ENCODE measurements at regions of chr2 and their contacts with region 1.

Region 1: DNA sequence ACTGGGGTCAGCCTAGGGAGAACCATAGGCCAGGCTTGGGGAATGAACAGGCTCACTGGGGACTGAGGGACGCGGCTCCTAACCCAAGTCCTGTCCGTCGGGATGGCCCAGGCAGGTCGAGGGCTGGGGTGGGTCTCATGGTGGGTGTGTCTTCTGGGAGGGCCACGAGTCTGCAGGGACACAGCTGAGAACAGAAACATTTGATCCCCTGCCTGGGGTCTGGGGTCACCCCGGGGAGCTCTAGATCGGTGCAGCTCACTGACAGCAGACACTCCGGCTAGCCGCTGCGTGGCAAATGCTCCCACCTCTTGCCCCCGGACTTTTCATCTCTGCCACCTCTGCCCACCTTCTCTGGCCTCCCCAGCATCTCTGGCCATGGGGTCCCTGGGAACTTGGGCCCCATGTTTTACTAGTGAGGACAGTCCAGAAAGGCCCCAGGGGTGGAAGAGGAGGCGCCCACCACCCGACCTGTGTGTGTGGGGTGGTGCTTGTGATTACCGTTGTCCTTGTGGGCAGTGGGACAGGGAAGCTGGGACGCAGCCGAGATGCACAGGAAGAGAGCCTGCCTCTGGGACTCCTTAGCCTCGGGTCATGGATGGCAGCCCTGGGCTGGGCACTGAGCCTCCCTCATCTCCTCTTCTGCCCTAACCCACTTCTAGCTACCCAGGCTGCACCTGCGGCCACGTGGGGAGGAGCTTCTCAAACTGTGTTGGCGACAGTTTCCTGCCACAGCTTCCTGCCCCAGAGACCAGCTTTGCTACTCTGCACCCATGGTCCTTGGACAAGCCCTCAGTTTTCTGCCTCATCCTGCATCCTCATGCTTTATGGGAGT is 4.9 kb downstream of the ZAP70 start:
- DNase-seq: peak in 8 of 9 donors; percentile 66 to 74 (median 69)
- ATAC-seq: peak; percentile 87
- H3K4me3 ChIP-seq: peak overlapping the region; percentile 68
- H3K4me3 Mint-ChIP-seq: peak overlapping the region; percentile 86 to 100 (median 94)
- H3K27ac ChIP-seq: peak overlapping the region; percentile 95
- H3K27ac Mint-ChIP-seq: peak overlapping the region; percentile 89 to 100 (median 97)
- H3K4me1 ChIP-seq: peaks cover 73 to 77% of the 10 kb centered on the region in 2 donors
- H3K4me1 Mint-ChIP-seq: peaks cover 64 to 91% (median 75%) of the 10 kb centered on the region in 7 donors
- H3K27me3 ChIP-seq: no peaks in the 10 kb centered on the region
- H3K27me3 Mint-ChIP-seq: no peaks in the 10 kb centered on the region

Region 2: DNA sequence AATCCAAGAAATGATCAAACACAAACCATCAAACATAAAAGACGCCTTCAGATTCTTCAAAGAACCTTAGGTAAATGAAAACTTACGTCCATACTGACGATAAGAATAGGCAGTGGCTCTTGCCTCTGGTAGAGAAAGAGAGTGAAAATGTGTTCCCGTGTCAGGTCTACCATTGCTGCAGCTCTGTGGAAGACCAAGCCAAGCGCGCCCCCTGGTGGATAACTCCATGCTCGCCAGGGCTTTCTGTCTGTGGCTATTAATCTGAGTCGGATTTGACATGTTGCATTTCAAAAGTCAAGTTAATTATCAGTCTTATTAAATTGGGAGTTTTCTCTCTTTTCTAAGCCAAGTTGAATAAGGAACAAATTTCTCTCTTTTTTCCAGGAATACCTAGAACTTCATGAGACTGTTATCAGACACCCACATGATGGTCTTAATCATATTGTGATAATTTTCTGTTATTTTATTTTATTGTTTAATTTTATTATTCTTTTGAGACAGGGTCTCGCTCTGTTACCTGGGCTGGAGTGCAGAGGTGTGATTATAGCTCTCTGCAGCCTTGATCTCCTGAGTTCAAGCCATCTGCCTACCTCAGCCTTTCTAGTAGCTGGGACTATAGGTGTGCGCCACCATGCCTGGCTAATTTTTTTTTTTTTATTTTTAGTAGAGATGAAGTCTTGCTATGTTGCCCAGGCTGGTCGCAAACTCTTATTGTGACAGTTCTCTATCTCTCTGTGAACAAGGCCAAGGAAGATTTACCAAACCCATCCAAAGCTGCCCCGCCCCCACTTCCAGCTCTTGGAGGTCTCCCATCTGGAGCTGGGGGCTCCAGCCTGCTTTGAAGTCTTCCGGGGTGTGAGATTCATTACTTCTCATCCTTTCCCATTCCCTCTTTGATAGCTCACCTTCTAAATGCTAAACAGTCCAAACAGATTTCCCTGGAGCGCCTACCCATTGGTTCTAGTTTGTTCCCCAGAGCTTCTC is 20.7 kb before region 1 on chr2:
- CTCF ChIA-PET with region 1: interaction called, 8 read pairs
- POLR2A ChIA-PET with region 1: interaction called, 6 read pairs
- intact Hi-C with region 1: loop called in 1 of 2 experiments (anchors 2 kb)
- DNase-seq: peak; percentile 78 to 94 (median 87)
- ATAC-seq: peak; percentile 95
- H3K4me3 ChIP-seq: no peak overlapping the region
- H3K4me3 Mint-ChIP-seq: peak overlapping the region in 4 of 10 donors; percentile 19 to 59 (median 23)
- H3K27ac ChIP-seq: no peak overlapping the region
- H3K27ac Mint-ChIP-seq: peak overlapping the region in 2 of 9 donors; percentile 30 to 46
- H3K4me1 ChIP-seq: no peaks in the 10 kb centered on the region
- H3K4me1 Mint-ChIP-seq: peaks cover 4 to 16% (median 13%) of the 10 kb centered on the region in 7 donors
- H3K27me3 ChIP-seq: no peaks in the 10 kb centered on the region
- H3K27me3 Mint-ChIP-seq: peaks cover 0 to 6% (median 0%) of the 10 kb centered on the region in 5 donors

Region 3: DNA sequence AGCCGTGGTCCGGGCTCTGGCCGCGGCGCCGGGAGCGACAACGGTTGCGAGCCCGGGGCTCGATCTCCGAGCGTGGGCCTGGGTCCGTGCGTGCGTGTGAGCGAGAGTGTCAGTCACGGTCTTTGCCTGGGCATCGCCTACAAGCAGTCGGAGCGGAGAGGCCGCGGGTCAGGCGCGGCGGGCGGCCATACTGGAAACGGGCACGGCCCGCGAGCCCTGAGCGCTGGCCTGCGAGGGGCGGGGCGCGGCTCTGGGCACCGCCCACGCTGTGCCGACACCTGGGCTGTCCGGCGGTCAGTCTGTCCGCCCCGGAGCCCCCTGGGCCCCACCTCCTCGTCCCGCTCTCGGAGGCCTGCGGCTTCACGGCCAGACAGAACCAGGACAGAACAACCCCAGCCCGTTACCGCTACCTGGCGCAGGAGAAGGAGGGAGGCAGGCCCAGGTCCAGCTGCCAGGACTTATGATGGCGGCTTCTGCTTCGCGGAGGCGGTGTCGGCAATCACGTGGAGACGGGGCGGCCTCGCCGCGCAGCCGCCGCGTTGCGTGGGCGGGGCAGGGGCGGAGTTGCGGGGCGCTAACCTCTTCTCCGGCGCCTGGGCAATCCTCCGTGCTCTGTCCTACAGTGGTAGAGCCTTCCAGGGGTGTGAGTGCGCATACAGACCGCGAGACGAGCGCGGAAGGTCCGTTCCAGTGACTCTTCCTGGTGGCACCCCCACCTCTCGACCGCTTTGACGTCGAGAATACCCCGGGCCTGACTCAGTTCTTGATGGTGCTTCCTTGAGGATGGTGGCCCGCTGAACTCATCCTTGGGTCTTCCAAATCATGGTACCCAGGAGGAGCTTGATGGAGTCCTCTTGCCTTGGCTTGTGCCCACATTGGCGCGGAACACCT is 277.7 kb after region 1 on chr2 and contains the start of gene TMEM131:
- CTCF ChIA-PET with region 1: no interaction called
- POLR2A ChIA-PET with region 1: no interaction called
- intact Hi-C with region 1: loop called in 1 of 2 experiments (anchors 5 kb)
- DNase-seq: peak; percentile 89 to 98 (median 95)
- ATAC-seq: peak; percentile 93
- H3K4me3 ChIP-seq: peak within 1 kb of the TSS; percentile 90
- H3K4me3 Mint-ChIP-seq: peak within 1 kb of the TSS; percentile 85 to 98 (median 96)
- H3K27ac ChIP-seq: peak within 1 kb of the TSS; percentile 96
- H3K27ac Mint-ChIP-seq: peak within 1 kb of the TSS; percentile 86 to 95 (median 93)
- H3K4me1 ChIP-seq: peaks cover 14 to 17% of the 10 kb centered on the region in 2 donors
- H3K4me1 Mint-ChIP-seq: peaks cover 20 to 40% (median 38%) of the 10 kb centered on the region in 7 donors
- H3K27me3 ChIP-seq: no peaks in the 10 kb centered on the region
- H3K27me3 Mint-ChIP-seq: peaks cover 0 to 4% (median 0%) of the 10 kb centered on the region in 5 donors
- total RNA-seq, gene TMEM131: 39.7 to 46.4 (median 43.6) TPM

Region 4: GRCh38 chr2:98487806-98488651 is 769.8 kb after region 1 on chr2:
- CTCF ChIA-PET with region 1: no interaction called
- POLR2A ChIA-PET with region 1: no interaction called
- intact Hi-C with region 1: loop called in 1 of 2 experiments (anchors 10 kb)
- DNase-seq: peak in 7 of 9 donors; percentile 49 to 68 (median 59)
- ATAC-seq: peak; percentile 90
- H3K4me3 ChIP-seq: no peak overlapping the region
- H3K4me3 Mint-ChIP-seq: peak overlapping the region; percentile 16 to 82 (median 58)
- H3K27ac ChIP-seq: peak overlapping the region; percentile 23
- H3K27ac Mint-ChIP-seq: peak overlapping the region; percentile 38 to 93 (median 75)
- H3K4me1 ChIP-seq: peaks cover 69 to 76% of the 10 kb centered on the region in 2 donors
- H3K4me1 Mint-ChIP-seq: peaks cover 56 to 100% (median 99%) of the 10 kb centered on the region in 7 donors
- H3K27me3 ChIP-seq: no peaks in the 10 kb centered on the region
- H3K27me3 Mint-ChIP-seq: no peaks in the 10 kb centered on the region

Measured in naive thymus-derived CD4-positive, alpha-beta T cell (primary cell).